HEK293T (cell line): ENCODE measurements at regions of chr4 and their contacts with region 1.

Region 1: DNA sequence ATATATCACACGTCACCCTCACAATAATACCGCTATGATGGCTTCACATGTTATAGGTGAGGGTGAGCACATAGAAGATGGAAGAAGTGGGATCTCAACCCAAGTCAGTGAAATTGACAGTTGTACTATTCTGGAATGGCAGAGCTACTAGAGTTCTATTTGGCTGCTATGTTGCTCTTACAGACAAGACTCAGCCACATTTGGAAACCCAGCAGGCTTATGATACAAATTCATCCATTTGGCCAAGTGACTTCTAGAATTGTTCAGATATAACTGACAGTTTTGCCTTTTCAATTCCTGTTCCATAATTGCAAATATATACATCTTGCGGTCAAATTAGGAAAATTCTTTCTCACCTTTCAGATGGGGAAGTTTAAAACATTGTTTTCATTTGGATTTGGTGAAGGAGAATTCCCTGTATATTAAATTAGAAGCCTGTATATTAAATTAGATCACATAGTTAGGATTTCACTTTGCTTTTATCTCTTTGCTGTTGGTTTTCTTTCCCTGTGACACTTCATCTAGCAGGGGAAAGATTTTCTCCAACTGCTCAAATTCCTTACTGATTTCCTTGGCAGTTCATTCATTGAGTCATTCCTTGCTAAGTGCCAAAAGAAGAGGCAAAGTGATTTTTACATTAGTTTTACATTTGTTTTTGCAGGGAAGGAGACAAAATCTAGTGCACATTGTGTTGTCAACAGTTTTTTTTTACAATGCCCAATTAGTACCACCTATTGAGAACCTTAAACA is 120.6 kb upstream of the TBC1D9 start:
- DNase-seq: no peak

Region 2: GRCh38 chr4:140893939-140894338 is 17.1 kb after region 1 on chr4:
- CTCF ChIA-PET with region 1: no interaction called
- POLR2A ChIA-PET with region 1: no interaction called
- DNase-seq: no peak

Region 3: GRCh38 chr4:140943486-140944198 is 66.9 kb after region 1 on chr4:
- CTCF ChIA-PET with region 1: no interaction called
- POLR2A ChIA-PET with region 1: no interaction called
- DNase-seq: no peak

Region 4: GRCh38 chr4:141448490-141448889 is 571.7 kb after region 1 on chr4:
- CTCF ChIA-PET with region 1: no interaction called
- POLR2A ChIA-PET with region 1: no interaction called
- DNase-seq: no peak

Region 5: DNA sequence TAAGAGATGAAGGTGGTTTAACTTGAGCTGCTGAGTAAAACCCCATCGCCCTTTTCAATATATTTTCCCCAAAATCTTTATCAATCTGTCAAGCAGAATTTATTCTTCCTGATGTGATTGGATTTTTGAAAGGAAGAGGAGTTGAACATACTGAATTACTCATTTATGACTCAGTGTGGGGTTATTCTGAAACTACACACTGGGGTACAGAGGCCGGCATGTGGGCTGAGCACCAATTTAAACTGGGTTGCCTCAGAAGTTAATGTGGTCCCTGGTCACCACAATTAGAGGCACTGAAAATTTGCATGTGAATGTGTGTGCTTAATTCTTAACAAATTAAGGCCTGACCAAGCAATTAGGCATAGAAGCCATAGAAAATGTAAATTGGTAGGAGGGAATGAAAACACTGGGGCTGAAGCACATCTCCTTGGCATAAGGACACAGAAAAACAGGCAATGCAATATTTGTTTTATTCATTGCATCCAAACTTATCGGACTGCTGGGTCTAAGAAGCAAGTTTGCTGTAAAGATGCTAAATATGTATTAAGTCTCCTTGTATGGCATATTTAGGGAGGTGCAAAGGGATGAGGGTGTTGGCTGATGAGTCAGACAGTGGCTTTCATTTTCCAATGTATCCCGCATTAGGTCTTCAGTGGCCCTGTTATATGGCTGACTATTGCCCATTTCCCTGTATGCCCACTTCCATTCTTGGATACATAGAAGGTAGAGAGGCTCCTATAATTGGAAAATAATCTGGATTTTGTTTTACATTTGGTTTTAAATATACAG is 930.5 kb after region 1 on chr4:
- CTCF ChIA-PET with region 1: interaction called, 10 read pairs
- POLR2A ChIA-PET with region 1: no interaction called
- DNase-seq: no peak